HepG2 (cell line): ENCODE measurements at regions of chr6 and their contacts with region 1.

Region 1: DNA sequence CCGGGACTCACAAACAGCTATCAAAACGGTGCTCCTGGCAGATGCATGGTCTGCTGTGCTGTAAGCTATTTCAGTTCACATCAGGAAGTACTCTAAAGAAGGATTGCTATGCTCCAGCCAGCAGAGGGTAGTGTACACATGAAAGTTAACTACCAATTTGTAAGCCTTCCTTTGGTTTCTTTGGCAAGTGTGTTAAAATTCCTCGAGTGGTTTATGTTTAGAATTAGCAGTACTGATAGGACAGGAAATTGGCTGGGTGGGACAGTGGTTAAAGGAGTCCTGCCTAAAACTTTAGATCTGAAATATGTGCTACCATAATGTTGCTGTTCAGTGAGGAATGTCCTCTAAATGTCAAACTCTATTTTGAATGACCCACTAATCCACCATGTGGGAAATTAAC is 47.4 kb downstream of the TRMT11 start:
- DNase-seq: peak; percentile 68
- ATAC-seq: peak; percentile 97
- H3K4me3 ChIP-seq: no peak overlapping the region
- H3K27ac ChIP-seq: no peak overlapping the region
- H3K4me1 ChIP-seq: peaks cover 14% of the 10 kb centered on the region
- H3K27me3 ChIP-seq: no peaks in the 10 kb centered on the region
- CTCF ChIP-seq: peak; percentile 78
- EP300 ChIP-seq: no peak
- POLR2A ChIP-seq: no peak
- RAD21 ChIP-seq: peak; percentile 62

Region 2: DNA sequence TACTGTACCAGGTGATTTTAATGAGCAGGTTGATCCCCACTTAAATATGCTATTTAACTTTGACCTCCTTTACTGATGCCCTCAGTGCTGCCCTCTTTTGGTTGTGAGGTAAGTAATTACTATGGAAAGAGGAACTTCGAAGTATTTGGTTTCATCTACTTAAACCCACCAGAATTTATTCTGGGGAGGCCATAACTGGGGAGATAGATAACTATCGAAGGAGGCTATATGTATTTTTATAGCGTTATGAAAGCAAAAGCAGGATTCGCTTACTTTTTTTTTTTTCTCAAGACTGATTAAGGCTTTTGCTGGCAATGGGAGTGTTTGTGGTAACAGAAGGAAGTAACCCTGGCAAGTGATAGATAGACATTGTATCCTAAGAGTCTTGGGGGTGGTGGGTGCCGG is 137.3 kb after region 1 on chr6:
- CTCF ChIA-PET with region 1: interaction called, 13 read pairs
- POLR2A ChIA-PET with region 1: no interaction called
- in situ Hi-C with region 1: no loop called
- intact Hi-C with region 1: loop called (anchors 1 kb)
- DNase-seq: peak; percentile 52
- ATAC-seq: peak; percentile 82
- H3K4me3 ChIP-seq: no peak overlapping the region
- H3K27ac ChIP-seq: no peak overlapping the region
- H3K4me1 ChIP-seq: no peaks in the 10 kb centered on the region
- H3K27me3 ChIP-seq: no peaks in the 10 kb centered on the region
- CTCF ChIP-seq: peak; percentile 57
- EP300 ChIP-seq: no peak
- POLR2A ChIP-seq: no peak
- RAD21 ChIP-seq: peak; percentile 13; the same call in 1 of the 2 replicates

Region 3: DNA sequence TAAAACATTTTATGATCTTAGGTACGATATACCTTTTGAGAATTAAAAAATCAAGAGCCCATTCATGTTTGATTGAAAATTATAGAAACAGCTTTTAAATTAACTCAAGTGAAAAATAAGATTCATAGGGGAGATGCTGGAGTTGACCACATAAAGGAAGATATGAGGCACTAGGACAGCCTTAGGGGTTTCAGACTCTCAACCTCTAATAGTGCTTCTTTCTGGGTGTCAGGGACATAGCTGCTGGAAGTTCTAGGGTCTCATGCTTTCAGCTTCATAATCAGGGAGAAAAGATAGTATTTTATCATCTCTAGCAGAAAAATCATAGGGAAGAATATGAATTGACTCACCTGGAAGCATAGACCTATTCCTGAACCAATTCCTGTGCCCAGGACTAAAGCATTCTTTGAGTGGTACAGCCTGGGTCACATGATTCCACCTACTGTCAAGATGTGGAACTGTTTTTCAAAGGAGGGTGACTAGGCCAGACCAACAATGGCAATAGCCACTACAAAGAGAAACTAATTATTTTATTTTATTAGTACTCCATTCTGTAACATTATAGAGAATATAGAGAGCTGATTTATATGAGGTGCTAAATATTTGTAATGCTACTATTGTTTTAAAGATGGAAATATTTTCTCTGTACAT is 278.4 kb after region 1 on chr6:
- CTCF ChIA-PET with region 1: interaction called, 5 read pairs
- POLR2A ChIA-PET with region 1: no interaction called
- in situ Hi-C with region 1: no loop called
- intact Hi-C with region 1: loop called (anchors 5 kb)
- DNase-seq: peak; percentile 44
- ATAC-seq: peak; percentile 100
- H3K4me3 ChIP-seq: no peak overlapping the region
- H3K27ac ChIP-seq: no peak overlapping the region
- H3K4me1 ChIP-seq: no peaks in the 10 kb centered on the region
- H3K27me3 ChIP-seq: no peaks in the 10 kb centered on the region
- CTCF ChIP-seq: peak; percentile 54
- EP300 ChIP-seq: no peak
- POLR2A ChIP-seq: no peak
- RAD21 ChIP-seq: 0 out of 2 replicates have a peak, but pooled peaks have one; percentile 12

Region 4: DNA sequence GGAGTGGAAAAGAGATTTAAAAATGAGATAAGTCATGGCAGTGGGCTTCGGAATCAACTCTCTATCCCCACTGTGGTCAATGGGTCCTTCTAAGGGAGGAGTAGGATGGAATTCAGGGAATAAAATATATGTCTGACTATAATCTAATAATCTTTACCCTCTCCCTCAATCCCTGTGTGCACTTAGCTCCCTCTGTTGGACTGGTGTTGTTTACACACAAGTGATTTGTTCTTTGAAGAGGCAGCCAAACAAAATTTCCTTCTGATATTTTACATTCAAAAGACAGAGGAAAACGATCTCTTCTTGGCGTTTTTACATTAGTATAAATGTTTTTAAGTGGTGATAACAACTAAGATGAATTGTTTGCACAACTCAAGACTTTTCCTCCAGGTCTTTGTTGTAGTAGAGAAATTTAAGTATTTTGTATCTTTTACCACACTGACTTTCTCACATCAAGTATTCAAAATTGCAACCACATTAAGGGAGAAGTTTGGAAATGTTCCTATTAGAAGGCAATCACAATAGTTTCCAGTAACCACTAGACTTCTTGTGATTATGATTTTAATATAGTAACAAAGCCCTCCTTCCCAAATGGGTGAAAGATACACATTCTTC is 624.0 kb after region 1 on chr6:
- CTCF ChIA-PET with region 1: no interaction called
- POLR2A ChIA-PET with region 1: no interaction called
- in situ Hi-C with region 1: loop called (anchors 25 kb)
- intact Hi-C with region 1: loop called (anchors 1 kb)
- DNase-seq: peak; percentile 20
- ATAC-seq: peak; percentile 73
- H3K4me3 ChIP-seq: no peak overlapping the region
- H3K27ac ChIP-seq: no peak overlapping the region
- H3K4me1 ChIP-seq: no peaks in the 10 kb centered on the region
- H3K27me3 ChIP-seq: no peaks in the 10 kb centered on the region
- CTCF ChIP-seq: peak; percentile 65
- EP300 ChIP-seq: no peak
- POLR2A ChIP-seq: no peak
- RAD21 ChIP-seq: peak; percentile 41

Region 5: GRCh38 chr6:127120787-127121636 is 1087.3 kb after region 1 on chr6:
- CTCF ChIA-PET with region 1: no interaction called
- POLR2A ChIA-PET with region 1: no interaction called
- in situ Hi-C with region 1: loop called (anchors 25 kb)
- intact Hi-C with region 1: no loop called
- DNase-seq: peak; percentile 63
- ATAC-seq: peak; percentile 86
- H3K4me3 ChIP-seq: no peak overlapping the region
- H3K27ac ChIP-seq: no peak overlapping the region
- H3K4me1 ChIP-seq: no peaks in the 10 kb centered on the region
- H3K27me3 ChIP-seq: peaks cover 14 to 43% of the 10 kb centered on the region in 2 experiments; a peak in 4 of 5 replicates
- CTCF ChIP-seq: peak; percentile 95
- EP300 ChIP-seq: no peak
- POLR2A ChIP-seq: no peak
- RAD21 ChIP-seq: peak; percentile 82